Gastrocnemius medialis (tissue), 4 donors: ENCODE measurements at regions of chr6 and their contacts with region 1.

Region 1: GRCh38 chr6:31769684-31770371 is 7.3 kb downstream of the VWA7 start:
- DNase-seq: peak; percentile 51 to 77
- ATAC-seq: peak; percentile 55 to 77
- H3K4me3 ChIP-seq: no peak overlapping the region
- H3K27ac ChIP-seq: no peak overlapping the region
- H3K4me1 ChIP-seq: no peaks in the 10 kb centered on the region
- H3K27me3 ChIP-seq: no peaks in the 10 kb centered on the region
- CTCF ChIP-seq: peak; percentile 66 to 89 (median 83)
- POLR2A ChIP-seq: no peak

Region 2: GRCh38 chr6:31680840-31681671 is 88.8 kb before region 1 on chr6 and contains the start of gene LY6G5C:
- in situ Hi-C with region 1: loop called in 2 of 4 experiments (anchors 5 kb)
- intact Hi-C with region 1: loop called (anchors 1 kb)
- DNase-seq: peak; percentile 77 to 82
- ATAC-seq: peak; percentile 97
- H3K4me3 ChIP-seq: peak within 1 kb of the TSS; percentile 43 to 85 (median 66)
- H3K27ac ChIP-seq: peak within 1 kb of the TSS; percentile 22 to 74 (median 56)
- H3K4me1 ChIP-seq: peaks cover 13% of the 10 kb centered on the region in 2 donors
- H3K27me3 ChIP-seq: no peaks in the 10 kb centered on the region
- CTCF ChIP-seq: peak; percentile 60 to 80 (median 76)
- POLR2A ChIP-seq: no peak
- total RNA-seq, gene LY6G5C: 1.3 to 3.2 TPM in 2 of 4 donors, not detected in the others

Region 3: DNA sequence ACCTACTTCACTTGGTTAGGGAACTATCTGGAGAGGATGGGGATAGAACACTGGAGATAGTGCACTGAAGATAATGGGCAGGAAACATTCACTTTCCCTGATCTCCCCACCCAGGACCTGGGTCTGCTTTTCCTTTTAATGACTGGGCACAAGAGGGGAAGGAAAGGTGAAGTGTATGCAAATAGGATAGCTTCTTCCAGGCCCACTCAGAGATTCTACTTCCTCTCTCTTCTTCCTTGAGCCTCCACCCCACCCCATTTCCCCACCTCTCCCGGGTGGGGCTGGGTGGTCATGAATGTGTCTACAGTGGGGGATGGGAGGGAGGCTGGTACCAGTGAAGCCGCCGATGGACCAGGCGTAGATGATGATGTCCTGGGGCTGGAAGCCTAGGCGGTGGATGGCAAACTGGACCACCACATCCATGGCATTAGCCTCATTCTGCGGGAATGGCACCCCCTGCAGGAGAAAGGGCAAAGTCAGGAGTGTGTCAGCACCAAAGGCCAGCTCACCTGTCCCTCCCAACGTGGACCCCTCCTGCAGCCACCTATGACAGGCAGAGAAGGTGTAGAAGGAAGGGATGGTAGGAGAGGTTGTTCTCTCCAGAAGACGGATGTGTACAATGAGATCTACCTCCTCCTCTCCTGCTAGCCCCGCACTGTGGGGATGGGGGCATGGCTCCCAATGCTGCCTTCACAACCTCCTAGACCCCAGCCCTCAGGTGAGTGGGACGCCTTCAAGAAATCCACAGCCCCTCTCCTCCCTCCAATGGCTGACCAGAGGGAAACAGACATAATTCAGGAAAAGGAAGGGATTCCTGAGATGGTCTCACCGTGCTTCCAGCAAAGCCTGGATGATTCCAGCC is 80.3 kb before region 1 on chr6:
- in situ Hi-C with region 1: loop called in 2 of 4 experiments (anchors 5 kb)
- intact Hi-C with region 1: no loop called
- DNase-seq: no peak
- ATAC-seq: no peak
- H3K4me3 ChIP-seq: no peak overlapping the region
- H3K27ac ChIP-seq: no peak overlapping the region
- H3K4me1 ChIP-seq: no peaks in the 10 kb centered on the region
- H3K27me3 ChIP-seq: no peaks in the 10 kb centered on the region
- CTCF ChIP-seq: no peak
- POLR2A ChIP-seq: no peak